H1 (cell line): ENCODE measurements at regions of chr1 and their contacts with region 1.

Region 1: DNA sequence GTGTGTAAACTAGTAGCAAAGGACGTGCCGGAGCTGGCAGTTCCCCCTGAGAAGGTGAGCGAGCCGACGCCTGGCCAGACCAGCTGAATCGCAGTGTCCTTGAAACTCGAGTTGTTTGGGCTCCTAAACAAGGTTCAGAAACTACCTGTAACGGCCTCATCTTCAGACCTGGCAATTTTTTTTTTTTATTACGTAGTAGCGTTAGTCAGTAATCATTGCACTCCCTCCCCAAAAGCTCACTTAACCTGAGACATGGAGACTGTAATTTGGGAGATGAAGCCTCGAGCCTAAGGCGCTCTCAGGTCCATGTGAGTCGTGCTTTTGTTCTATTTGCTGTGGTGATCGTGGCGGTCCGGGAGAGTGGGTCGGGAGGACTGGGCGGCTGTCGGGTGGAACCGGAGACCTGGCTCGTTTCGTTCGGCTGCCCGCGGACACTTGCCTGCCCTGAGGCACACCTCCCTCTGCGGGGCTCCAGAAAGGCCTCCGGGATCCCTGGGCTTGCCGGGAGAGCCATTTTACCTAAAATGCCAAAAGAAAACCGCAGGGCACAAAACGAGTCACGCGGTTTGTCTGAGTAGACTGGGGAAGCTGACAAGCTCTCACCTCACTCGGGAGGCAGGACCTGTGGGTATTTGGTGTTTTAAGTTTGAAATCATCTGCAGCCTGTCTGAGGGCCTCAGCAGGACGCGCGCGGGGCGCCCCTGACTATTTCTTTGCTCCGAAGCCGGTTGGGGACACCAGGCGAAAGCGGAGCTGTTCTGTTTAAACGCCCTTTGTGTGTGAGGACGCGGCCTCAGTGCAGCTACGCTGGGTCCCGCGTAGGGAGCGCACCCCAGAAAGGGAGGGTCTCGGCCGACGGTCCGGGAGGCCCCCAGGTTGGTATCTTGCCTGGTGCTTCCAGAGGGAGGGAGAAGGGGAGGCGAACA is 722 bp downstream of the LHX8 start:
- DNase-seq: peak in 1 of 2 experiments; percentile 79
- H3K4me3 ChIP-seq: peak overlapping the region; percentile 49 to 70 (median 57)
- H3K27ac ChIP-seq: no peak overlapping the region
- H3K4me1 ChIP-seq: peaks cover 10 to 46% (median 22%) of the 10 kb centered on the region in 4 experiments
- H3K27me3 ChIP-seq: peaks cover 43 to 94% (median 72%) of the 10 kb centered on the region in 4 experiments
- CTCF ChIP-seq: no peak
- EP300 ChIP-seq: no peak
- POLR2A ChIP-seq: no peak
- RAD21 ChIP-seq: no peak

Region 2: GRCh38 chr1:74908797-74909196 is 226.1 kb before region 1 on chr1:
- CTCF ChIA-PET with region 1: no interaction called
- POLR2A ChIA-PET with region 1: no interaction called
- DNase-seq: no peak
- H3K4me3 ChIP-seq: no peak overlapping the region
- H3K27ac ChIP-seq: no peak overlapping the region
- H3K4me1 ChIP-seq: no peaks in the 10 kb centered on the region
- H3K27me3 ChIP-seq: no peaks in the 10 kb centered on the region
- CTCF ChIP-seq: no peak
- EP300 ChIP-seq: no peak
- POLR2A ChIP-seq: no peak
- RAD21 ChIP-seq: no peak

Region 3: GRCh38 chr1:75100481-75101092 is 34.3 kb before region 1 on chr1:
- CTCF ChIA-PET with region 1: interaction called, 23 read pairs
- POLR2A ChIA-PET with region 1: no interaction called
- DNase-seq: no peak
- H3K4me3 ChIP-seq: no peak overlapping the region
- H3K27ac ChIP-seq: no peak overlapping the region
- H3K4me1 ChIP-seq: peaks cover 0 to 4% (median 1%) of the 10 kb centered on the region in 4 experiments; a peak in 2 of 7 replicates
- H3K27me3 ChIP-seq: no peaks in the 10 kb centered on the region
- CTCF ChIP-seq: no peak
- EP300 ChIP-seq: no peak
- POLR2A ChIP-seq: no peak
- RAD21 ChIP-seq: no peak